Naive thymus-derived CD4-positive, alpha-beta T cell (primary cell): ENCODE measurements at regions of chr7 and their contacts with region 1.

Region 1: DNA sequence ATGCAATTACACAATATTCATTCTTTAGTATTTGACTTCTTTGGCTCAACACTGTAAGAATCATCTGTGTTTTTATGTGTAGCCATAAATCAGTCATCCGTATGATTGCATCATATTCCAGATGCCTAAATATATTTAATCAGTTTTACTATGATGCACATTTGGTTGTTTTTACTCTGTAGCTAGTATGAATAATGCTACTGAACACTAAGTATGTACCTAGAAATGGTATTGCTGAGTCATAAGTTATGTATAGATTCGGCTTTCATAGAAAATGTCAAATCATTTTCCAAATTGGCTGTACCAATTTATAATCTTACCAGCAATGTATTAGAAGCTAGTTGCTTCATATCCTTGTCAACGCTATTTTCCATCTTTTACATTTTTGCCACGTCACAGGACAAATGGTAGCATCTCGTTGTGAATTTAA is 197.3 kb upstream of the PLXNA4 start:
- DNase-seq: no peak
- ATAC-seq: no peak
- H3K4me3 ChIP-seq: no peak overlapping the region
- H3K4me3 Mint-ChIP-seq: no peak overlapping the region
- H3K27ac ChIP-seq: no peak overlapping the region
- H3K27ac Mint-ChIP-seq: peak overlapping the region in 3 of 9 donors; percentile 0 to 53 (median 42)
- H3K4me1 ChIP-seq: peaks cover 0 to 24% of the 10 kb centered on the region in 2 donors
- H3K4me1 Mint-ChIP-seq: peaks cover 22 to 53% (median 39%) of the 10 kb centered on the region in 7 donors
- H3K27me3 ChIP-seq: no peaks in the 10 kb centered on the region
- H3K27me3 Mint-ChIP-seq: peaks cover 0 to 8% (median 0%) of the 10 kb centered on the region in 5 donors

Region 2: GRCh38 chr7:132354527-132354926 is 419.0 kb before region 1 on chr7:
- CTCF ChIA-PET with region 1: no interaction called
- POLR2A ChIA-PET with region 1: no interaction called
- intact Hi-C with region 1: no loop called
- DNase-seq: no peak
- ATAC-seq: no peak
- H3K4me3 ChIP-seq: no peak overlapping the region
- H3K4me3 Mint-ChIP-seq: no peak overlapping the region
- H3K27ac ChIP-seq: no peak overlapping the region
- H3K27ac Mint-ChIP-seq: no peak overlapping the region
- H3K4me1 ChIP-seq: no peaks in the 10 kb centered on the region
- H3K4me1 Mint-ChIP-seq: peaks cover 0 to 3% (median 0%) of the 10 kb centered on the region in 7 donors
- H3K27me3 ChIP-seq: no peaks in the 10 kb centered on the region
- H3K27me3 Mint-ChIP-seq: peaks cover 23 to 57% (median 33%) of the 10 kb centered on the region in 5 donors

Region 3: DNA sequence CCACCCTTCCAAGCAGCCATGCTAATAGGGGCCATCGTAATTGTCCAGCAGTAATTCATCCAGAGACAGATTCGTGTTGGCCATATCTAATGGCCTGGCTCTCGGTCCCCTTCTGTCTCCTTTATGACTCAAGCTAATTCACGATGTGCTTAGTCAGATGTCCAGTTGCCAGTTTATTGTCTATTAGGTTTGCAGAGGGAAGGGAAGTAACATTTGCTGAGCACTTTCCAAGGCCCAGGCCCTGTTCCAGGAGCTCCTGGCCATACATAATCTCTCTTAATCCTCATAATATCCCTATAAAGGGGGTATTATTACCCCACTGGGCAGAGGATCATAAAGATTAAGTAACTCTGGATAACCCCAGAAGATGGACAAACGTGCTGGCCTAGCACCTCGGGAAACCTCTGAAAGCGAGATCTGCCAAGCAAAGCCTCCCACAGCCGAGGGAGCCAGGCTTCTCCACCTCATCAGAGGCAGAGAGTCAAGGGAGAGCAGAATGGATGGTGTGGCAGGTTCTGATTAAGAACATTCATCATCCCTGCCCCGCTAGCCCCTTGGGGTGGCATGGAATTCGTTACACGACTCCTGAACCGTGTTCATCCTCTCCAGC is 350.9 kb before region 1 on chr7:
- CTCF ChIA-PET with region 1: no interaction called
- POLR2A ChIA-PET with region 1: no interaction called
- intact Hi-C with region 1: no loop called
- DNase-seq: no peak
- ATAC-seq: no peak
- H3K4me3 ChIP-seq: no peak overlapping the region
- H3K4me3 Mint-ChIP-seq: no peak overlapping the region
- H3K27ac ChIP-seq: no peak overlapping the region
- H3K27ac Mint-ChIP-seq: no peak overlapping the region
- H3K4me1 ChIP-seq: peaks cover 0 to 13% of the 10 kb centered on the region in 2 donors
- H3K4me1 Mint-ChIP-seq: peaks cover 11 to 42% (median 20%) of the 10 kb centered on the region in 7 donors
- H3K27me3 ChIP-seq: no peaks in the 10 kb centered on the region
- H3K27me3 Mint-ChIP-seq: peaks cover 0 to 40% (median 0%) of the 10 kb centered on the region in 5 donors

Region 4: DNA sequence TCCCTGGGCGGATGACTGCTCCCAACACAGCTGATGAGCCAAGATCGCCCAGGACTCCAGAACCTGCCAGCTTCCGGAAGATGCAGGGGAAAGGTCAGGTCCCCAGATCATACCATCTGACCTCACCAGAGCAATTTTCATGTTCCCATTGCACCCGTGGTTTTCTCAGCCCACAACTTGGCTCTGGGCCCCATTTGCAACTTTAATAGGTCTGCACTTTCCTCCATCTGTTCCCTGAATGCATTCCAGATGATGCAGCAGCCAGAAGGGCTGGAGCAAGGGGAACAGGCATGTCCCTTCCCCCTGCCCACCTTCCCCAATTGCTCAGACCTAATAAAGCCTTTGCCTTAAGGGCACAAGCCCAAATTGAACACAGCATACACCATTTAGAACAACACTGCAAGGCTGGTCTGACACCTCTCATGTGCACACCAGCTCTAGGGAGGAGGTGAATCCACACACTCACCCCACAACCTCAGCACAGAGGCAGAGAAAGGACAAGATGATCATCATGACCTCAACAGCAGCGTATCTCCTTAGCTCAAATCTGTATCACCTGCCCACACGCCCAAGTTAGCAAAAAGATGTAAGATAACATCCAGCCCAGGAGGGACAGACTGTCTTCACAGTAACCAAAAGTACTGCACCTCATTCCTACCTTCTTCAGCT is 284.8 kb before region 1 on chr7:
- CTCF ChIA-PET with region 1: no interaction called
- POLR2A ChIA-PET with region 1: no interaction called
- intact Hi-C with region 1: loop called in 1 of 2 experiments (anchors 5 kb)
- DNase-seq: no peak
- ATAC-seq: no peak
- H3K4me3 ChIP-seq: no peak overlapping the region
- H3K4me3 Mint-ChIP-seq: no peak overlapping the region
- H3K27ac ChIP-seq: no peak overlapping the region
- H3K27ac Mint-ChIP-seq: peak overlapping the region in 1 of 9 donors; percentile 3
- H3K4me1 ChIP-seq: peaks cover 22 to 31% of the 10 kb centered on the region in 2 donors
- H3K4me1 Mint-ChIP-seq: peaks cover 29 to 56% (median 45%) of the 10 kb centered on the region in 7 donors
- H3K27me3 ChIP-seq: no peaks in the 10 kb centered on the region
- H3K27me3 Mint-ChIP-seq: peaks cover 0 to 42% (median 0%) of the 10 kb centered on the region in 5 donors

Region 5: GRCh38 chr7:132654150-132654549 is 119.4 kb before region 1 on chr7:
- CTCF ChIA-PET with region 1: interaction called, 6 read pairs
- POLR2A ChIA-PET with region 1: no interaction called
- intact Hi-C with region 1: loop called (anchors 1 to 10 kb)
- DNase-seq: peak in 4 of 9 donors; percentile 23 to 32 (median 26)
- ATAC-seq: peak; percentile 48
- H3K4me3 ChIP-seq: no peak overlapping the region
- H3K4me3 Mint-ChIP-seq: peak overlapping the region in 8 of 10 donors; percentile 44 to 75 (median 54)
- H3K27ac ChIP-seq: no peak overlapping the region
- H3K27ac Mint-ChIP-seq: peak overlapping the region in 5 of 9 donors; percentile 6 to 92 (median 84)
- H3K4me1 ChIP-seq: peaks cover 14 to 21% of the 10 kb centered on the region in 2 donors
- H3K4me1 Mint-ChIP-seq: peaks cover 19 to 57% (median 45%) of the 10 kb centered on the region in 7 donors
- H3K27me3 ChIP-seq: no peaks in the 10 kb centered on the region
- H3K27me3 Mint-ChIP-seq: no peaks in the 10 kb centered on the region

Region 6: DNA sequence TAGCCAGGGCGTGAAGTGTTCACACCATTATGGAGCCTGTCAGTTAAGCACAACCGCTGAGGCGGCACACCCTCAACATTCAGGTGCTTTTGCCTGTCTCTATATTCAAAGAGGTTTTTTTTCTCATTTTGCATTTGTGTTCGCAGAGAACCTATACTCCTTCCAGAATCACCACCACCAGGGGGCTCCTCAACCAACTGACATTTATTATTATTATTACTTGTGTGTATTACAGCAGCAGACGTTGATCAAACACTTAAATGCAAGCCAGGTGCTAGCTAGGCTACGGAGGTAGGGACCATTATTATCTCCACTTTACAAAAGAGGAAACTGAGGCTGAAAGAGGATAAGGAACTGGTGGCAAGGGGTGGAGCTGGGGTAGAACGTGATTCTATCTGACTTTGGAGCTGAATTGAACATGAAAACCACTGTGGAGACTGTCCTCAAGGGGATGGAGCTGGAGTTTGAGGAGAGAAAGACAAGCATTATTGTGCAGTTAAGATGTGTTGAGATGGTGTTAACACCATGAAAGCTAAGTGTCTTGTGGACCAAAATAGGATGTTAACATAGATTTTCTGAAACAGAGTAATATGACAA is 63.5 kb before region 1 on chr7:
- CTCF ChIA-PET with region 1: no interaction called
- POLR2A ChIA-PET with region 1: interaction called, 4 read pairs
- intact Hi-C with region 1: loop called in 1 of 2 experiments (anchors 1 kb)
- DNase-seq: peak in 4 of 9 donors; percentile 12 to 30 (median 24)
- ATAC-seq: no peak
- H3K4me3 ChIP-seq: no peak overlapping the region
- H3K4me3 Mint-ChIP-seq: no peak overlapping the region
- H3K27ac ChIP-seq: no peak overlapping the region
- H3K27ac Mint-ChIP-seq: no peak overlapping the region
- H3K4me1 ChIP-seq: no peaks in the 10 kb centered on the region
- H3K4me1 Mint-ChIP-seq: peaks cover 0 to 13% (median 2%) of the 10 kb centered on the region in 7 donors
- H3K27me3 ChIP-seq: no peaks in the 10 kb centered on the region
- H3K27me3 Mint-ChIP-seq: peaks cover 0 to 2% (median 0%) of the 10 kb centered on the region in 5 donors

Region 7: GRCh38 chr7:133252858-133253518 is 479.4 kb after region 1 on chr7 and contains the start of gene EXOC4:
- CTCF ChIA-PET with region 1: no interaction called
- POLR2A ChIA-PET with region 1: no interaction called
- intact Hi-C with region 1: loop called in 1 of 2 experiments (anchors 5 kb)
- DNase-seq: peak; percentile 66 to 97 (median 95)
- ATAC-seq: peak; percentile 100
- H3K4me3 ChIP-seq: peak within 1 kb of the TSS; percentile 87
- H3K4me3 Mint-ChIP-seq: peak within 1 kb of the TSS; percentile 85 to 99 (median 96)
- H3K27ac ChIP-seq: peak within 1 kb of the TSS; percentile 93
- H3K27ac Mint-ChIP-seq: peak within 1 kb of the TSS; percentile 94 to 98 (median 96)
- H3K4me1 ChIP-seq: peaks cover 4 to 7% of the 10 kb centered on the region in 2 donors
- H3K4me1 Mint-ChIP-seq: peaks cover 22 to 45% (median 40%) of the 10 kb centered on the region in 7 donors
- H3K27me3 ChIP-seq: no peaks in the 10 kb centered on the region
- H3K27me3 Mint-ChIP-seq: peaks cover 0 to 9% (median 0%) of the 10 kb centered on the region in 5 donors
- total RNA-seq, gene EXOC4: 65.4 to 106 (median 82.9) TPM